ENCODE measurements at regions of chr17 and their contacts with region 1.

Region 1: DNA sequence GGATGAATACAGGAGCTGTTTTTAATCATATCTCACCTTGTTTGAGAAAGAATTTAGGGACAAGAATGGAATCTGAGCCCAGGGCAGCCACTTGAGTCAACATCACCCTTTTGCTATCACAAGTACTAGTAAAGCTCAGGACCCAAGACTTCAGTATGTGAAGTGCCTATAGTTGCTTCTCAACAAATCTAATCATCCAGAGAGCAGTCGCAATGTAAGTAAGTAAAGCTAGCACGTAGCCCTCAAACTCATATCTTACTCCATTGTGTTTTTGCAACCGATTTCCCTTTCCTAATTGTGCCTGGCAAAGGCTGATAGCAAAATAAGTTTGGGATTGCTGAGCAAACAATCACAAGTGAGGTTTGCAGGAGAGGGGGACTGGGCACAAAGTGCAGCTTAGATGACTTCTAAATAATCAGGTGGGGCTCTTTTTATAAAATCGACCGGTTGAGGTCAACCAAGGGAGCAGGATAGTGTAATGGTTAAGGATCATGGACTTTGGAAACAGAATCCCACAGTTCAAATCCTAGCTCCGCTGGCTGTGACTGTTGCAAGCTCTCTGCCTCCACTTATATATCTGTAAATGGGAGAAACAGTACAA is 13.0 kb downstream of the TOB1 start:
- DNase-seq: no peak
- ATAC-seq: no peak
- H3K4me3 ChIP-seq: no peak overlapping the region
- H3K4me1 ChIP-seq: peaks cover 28% of the 10 kb centered on the region
- CTCF ChIP-seq: no peak

Region 2: GRCh38 chr17:50956750-50957523 is 103.8 kb after region 1 on chr17:
- intact Hi-C with region 1: loop called (anchors 5 kb)
- DNase-seq: peak in 2 of 3 donors; percentile 72 to 81
- ATAC-seq: peak; percentile 71
- H3K4me3 ChIP-seq: no peak overlapping the region
- H3K4me1 ChIP-seq: peaks cover 10% of the 10 kb centered on the region
- CTCF ChIP-seq: peak; percentile 64

Region 3: DNA sequence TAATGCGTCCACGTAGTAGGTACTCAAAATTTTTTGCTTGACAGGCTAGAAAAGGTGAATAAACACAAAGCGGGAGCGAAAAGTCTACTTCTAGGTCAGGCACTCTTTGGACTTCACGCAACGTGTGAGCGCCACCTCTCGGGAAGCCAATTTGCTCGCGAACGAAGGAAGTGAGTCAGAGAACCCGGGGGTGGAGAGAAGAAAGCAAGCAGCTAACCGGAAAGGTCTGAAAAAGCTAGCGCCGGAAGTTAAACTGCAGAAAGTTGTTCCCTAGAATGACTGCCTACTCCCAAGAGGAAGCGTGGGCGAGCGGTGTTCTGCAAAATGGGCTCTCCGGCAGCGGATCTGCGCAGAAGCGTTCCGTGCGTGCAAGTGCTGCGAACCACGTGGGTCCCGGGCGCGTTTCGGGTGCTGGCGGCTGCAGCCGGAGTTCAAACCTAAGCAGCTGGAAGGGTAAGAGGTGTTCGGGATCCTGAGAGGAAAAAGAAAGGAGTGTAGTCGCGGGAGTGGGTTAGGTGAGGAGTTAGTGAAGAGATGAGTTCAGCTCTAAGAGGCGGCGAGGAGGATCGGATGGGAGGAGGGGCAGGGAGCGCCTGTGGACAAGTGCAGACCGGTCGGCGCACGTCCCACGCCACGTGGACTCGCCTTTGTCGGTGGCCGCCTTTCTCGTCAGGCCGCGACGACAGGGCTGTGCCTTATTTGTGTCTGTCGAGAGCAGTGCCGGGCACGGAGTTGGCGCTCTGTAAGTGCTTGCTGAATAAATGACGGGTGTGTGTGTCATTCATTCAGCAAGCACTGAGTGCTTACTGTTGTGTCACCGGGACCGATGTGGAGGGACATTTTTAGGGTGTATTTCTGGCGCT is 300.3 kb after region 1 on chr17 and contains the start of gene NME1:
- intact Hi-C with region 1: loop called in 1 of 2 experiments (anchors 10 kb)
- DNase-seq: peak; percentile 97 to 98 (median 98)
- ATAC-seq: peak; percentile 98
- H3K4me3 ChIP-seq: peak within 1 kb of the TSS; percentile 12
- H3K4me1 ChIP-seq: peaks cover 15% of the 10 kb centered on the region
- CTCF ChIP-seq: peak; percentile 62
- total RNA-seq, gene NME1: 18.8 to 64.2 (median 23.9) TPM

Measured in mucosa of descending colon (tissue), 3 donors.